Ascending aorta (tissue), 2 donors: ENCODE measurements at regions of chr6 and their contacts with region 1.

Region 1: GRCh38 chr6:7615611-7616383 is 25.8 kb downstream of the SNRNP48 start:
- DNase-seq: no peak
- H3K4me3 ChIP-seq: peak overlapping the region in 1 of 2 donors; percentile 5
- H3K27ac ChIP-seq: no peak overlapping the region
- H3K4me1 ChIP-seq: no peaks in the 10 kb centered on the region
- H3K27me3 ChIP-seq: no peaks in the 10 kb centered on the region
- CTCF ChIP-seq: peak; percentile 41 to 76 (median 58)

Region 2: DNA sequence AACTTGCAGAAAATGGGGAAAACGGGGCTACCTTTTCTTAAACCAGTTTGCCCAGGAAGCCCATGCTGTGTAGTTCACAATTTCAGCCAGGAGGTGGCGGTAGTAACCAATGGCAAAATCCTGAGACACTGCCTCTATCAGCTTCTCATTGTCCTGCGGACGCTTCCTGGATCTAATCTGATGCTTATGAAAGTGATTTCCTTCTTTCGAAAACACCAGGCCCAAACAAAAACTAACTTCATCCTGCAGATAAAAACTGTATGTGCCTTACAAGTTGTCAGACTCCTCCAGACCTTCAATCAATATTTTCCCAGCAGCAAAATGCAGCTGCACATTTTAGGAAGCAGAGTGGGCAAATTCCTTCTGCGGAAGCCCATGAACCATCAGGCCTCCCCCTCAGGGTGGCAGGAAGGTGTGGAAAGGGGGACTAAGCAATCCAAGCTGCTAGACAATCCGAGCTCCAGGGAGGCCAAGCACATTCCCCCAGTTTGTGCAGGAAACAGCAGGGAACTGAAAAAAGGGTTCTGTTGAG is 938.8 kb before region 1 on chr6:
- intact Hi-C with region 1: loop called (anchors 10 kb)
- DNase-seq: peak in 1 of 2 donors; percentile 85
- H3K4me3 ChIP-seq: no peak overlapping the region
- H3K27ac ChIP-seq: no peak overlapping the region
- H3K4me1 ChIP-seq: no peaks in the 10 kb centered on the region
- H3K27me3 ChIP-seq: no peaks in the 10 kb centered on the region
- CTCF ChIP-seq: peak; percentile 77 to 97 (median 94)

Region 3: DNA sequence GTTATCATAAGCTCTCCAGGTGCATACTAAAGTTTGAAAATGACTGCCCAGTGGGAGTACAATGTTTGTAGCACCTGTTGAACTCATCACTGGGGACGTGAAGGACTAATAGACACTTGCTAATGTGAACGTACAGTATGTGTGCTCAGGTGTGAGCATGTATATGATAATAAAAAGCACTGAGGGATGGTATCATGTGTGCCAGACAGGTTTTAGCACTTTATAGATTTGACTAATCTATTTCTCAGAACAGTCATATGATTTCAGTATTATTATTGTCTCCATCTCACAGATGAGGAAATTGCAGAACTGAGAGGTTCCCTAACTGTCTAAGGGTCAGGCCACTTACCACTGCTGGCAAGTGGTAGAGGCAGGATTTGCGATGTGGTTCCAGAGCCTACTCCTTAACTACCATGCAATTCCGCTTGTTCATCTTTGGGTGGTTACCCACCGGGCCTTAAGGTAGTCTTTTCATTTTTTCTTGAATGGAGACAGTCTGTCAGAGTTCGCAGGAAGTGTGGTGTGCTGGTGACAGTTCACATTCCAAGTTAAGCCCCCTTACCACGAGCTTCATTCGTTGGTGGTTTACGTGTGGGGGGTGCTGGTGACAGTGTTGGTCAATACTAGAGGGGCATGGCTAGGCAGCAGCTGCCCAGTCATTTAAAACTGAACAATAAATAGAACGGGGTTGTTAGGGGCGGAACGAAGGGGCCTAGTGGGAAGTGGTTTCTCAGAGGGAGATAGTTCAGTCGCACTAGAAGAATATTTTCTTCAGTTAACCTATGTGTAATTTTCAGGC is 461.3 kb before region 1 on chr6:
- intact Hi-C with region 1: no loop called
- DNase-seq: no peak
- H3K4me3 ChIP-seq: no peak overlapping the region
- H3K27ac ChIP-seq: no peak overlapping the region
- H3K4me1 ChIP-seq: peaks cover 3 to 20% of the 10 kb centered on the region in 2 donors
- H3K27me3 ChIP-seq: no peaks in the 10 kb centered on the region
- CTCF ChIP-seq: no peak

Region 4: GRCh38 chr6:7276199-7276524 is 339.6 kb before region 1 on chr6:
- intact Hi-C with region 1: loop called (anchors 1 kb)
- DNase-seq: no peak
- H3K4me3 ChIP-seq: no peak overlapping the region
- H3K27ac ChIP-seq: no peak overlapping the region
- H3K4me1 ChIP-seq: no peaks in the 10 kb centered on the region
- H3K27me3 ChIP-seq: no peaks in the 10 kb centered on the region
- CTCF ChIP-seq: no peak